ENCODE measurements at regions of chr18 and their contacts with region 1.

Region 1: DNA sequence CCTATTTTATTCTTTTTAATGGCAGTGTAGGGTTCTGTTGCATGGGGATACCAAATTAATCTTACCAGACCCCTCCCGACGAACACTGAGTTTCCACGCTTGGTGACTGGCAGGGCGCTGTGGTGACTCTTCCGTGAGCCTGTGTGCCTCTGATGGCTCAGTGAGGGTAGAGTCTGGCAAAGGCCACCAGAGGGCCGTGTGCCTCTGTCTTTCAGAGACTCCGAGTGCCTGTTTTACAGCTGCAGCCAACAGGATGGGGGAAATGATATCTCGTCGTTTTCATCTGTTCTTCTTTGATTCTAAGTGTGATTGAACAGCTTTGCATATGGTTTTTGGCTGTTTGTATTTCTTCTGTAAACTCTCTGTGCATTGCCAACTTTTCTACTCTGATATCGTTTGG is 99.8 kb downstream of the ZNF236 start:
- H3K4me3 ChIP-seq: no peak overlapping the region
- H3K27ac ChIP-seq: no peak overlapping the region
- H3K4me1 ChIP-seq: no peaks in the 10 kb centered on the region
- CTCF ChIP-seq: peak; percentile 55; the same call in 1 of the 2 replicates

Region 2: GRCh38 chr18:76756531-76757253 is 165.4 kb before region 1 on chr18:
- CTCF ChIA-PET with region 1: no interaction called
- POLR2A ChIA-PET with region 1: no interaction called
- H3K4me3 ChIP-seq: no peak overlapping the region
- H3K27ac ChIP-seq: no peak overlapping the region
- H3K4me1 ChIP-seq: no peaks in the 10 kb centered on the region
- CTCF ChIP-seq: no peak

Region 3: GRCh38 chr18:76932026-76932819 is 10.1 kb after region 1 on chr18:
- CTCF ChIA-PET with region 1: interaction called, 38 read pairs
- POLR2A ChIA-PET with region 1: no interaction called
- H3K4me3 ChIP-seq: no peak overlapping the region
- H3K27ac ChIP-seq: no peak overlapping the region
- H3K4me1 ChIP-seq: no peaks in the 10 kb centered on the region
- CTCF ChIP-seq: no peak

Measured in HEK293 (cell line).